Panc1 (cell line): ENCODE measurements at regions of chr6 and their contacts with region 1.

Region 1: GRCh38 chr6:10073341-10073740 is 341.5 kb downstream of the TFAP2A start:
- DNase-seq: no peak
- ATAC-seq: no peak
- H3K4me3 ChIP-seq: no peak overlapping the region
- H3K27ac ChIP-seq: no peak overlapping the region; the same call in 1 of the 2 replicates
- H3K4me1 ChIP-seq: no peaks in the 10 kb centered on the region
- H3K27me3 ChIP-seq: no peaks in the 10 kb centered on the region
- CTCF ChIP-seq: no peak

Region 2: DNA sequence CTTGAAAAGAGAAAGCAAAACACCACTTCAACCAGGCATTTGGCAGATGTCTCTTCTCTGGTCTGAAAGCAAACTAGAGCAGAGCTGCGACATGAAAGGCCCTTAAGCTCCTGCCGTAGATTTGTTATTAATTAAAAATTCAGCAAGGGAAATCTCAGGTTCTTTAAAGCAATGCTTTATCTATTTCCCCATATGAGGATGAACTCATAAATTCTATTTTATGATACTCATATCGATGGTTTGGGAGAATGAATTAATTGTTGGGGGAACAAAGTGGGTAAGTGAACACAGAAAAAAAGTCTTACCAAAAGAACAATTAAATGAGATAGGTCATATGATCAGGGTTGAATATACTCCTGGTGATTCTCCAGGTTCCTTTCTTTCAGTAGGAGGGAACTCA is 1173.3 kb before region 1 on chr6:
- CTCF ChIA-PET with region 1: no interaction called
- POLR2A ChIA-PET with region 1: interaction called, 16 read pairs
- in situ Hi-C with region 1: no loop called
- intact Hi-C with region 1: no loop called
- DNase-seq: no peak
- ATAC-seq: no peak
- H3K4me3 ChIP-seq: no peak overlapping the region
- H3K27ac ChIP-seq: no peak overlapping the region
- H3K4me1 ChIP-seq: no peaks in the 10 kb centered on the region
- H3K27me3 ChIP-seq: no peaks in the 10 kb centered on the region
- CTCF ChIP-seq: no peak

Region 3: GRCh38 chr6:9028086-9028485 is 1045.3 kb before region 1 on chr6:
- CTCF ChIA-PET with region 1: no interaction called
- POLR2A ChIA-PET with region 1: no interaction called
- in situ Hi-C with region 1: no loop called
- intact Hi-C with region 1: no loop called
- DNase-seq: no peak
- ATAC-seq: no peak
- H3K4me3 ChIP-seq: no peak overlapping the region
- H3K27ac ChIP-seq: no peak overlapping the region
- H3K4me1 ChIP-seq: no peaks in the 10 kb centered on the region
- H3K27me3 ChIP-seq: no peaks in the 10 kb centered on the region
- CTCF ChIP-seq: no peak